Caco-2 (cell line): ENCODE measurements at regions of chr19 and their contacts with region 1.

Region 1: DNA sequence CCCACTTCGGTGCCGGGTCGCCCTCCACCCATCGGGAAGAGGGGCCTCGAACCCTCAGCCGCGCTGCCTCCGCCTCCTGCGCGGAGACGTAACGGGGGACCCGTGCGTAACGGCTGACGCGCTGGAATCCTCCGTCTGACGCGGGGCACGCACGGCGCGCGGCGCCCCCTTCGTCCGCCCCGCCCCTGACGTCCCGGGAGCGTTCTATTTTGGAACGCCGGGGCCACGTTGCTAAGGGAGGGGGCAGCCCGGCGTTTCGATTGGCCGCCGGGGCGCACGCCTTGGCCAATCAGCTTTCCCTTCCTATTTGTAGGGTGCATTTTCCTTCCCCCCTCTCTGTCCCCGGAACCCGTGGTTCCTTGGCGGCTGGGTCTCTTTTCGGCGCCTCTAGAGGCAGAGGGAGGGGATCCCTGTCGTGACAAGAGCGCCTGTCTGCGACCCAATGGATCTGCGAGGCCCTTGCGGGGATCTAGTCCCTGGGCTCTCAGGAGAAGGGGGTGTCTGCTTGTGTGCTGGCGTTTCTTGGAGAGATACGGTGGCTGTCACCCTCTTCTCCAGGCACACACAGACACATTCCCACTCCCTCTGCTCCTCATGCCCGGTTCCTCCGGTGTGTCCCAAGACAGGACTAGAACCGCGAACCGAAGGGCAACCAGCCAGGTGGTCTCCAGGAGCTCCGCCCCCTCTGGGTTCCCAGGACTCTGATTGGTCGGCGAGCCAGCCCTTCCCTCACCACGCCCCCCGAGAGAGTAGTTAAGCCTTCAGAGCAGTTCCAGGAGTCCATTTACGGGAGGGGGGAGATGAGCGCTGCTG is 1.5 kb downstream of the FOSB start:
- DNase-seq: peak; percentile 93 to 96
- H3K4me3 ChIP-seq: peak overlapping the region; percentile 74
- H3K4me3 Mint-ChIP-seq: peak overlapping the region; percentile 92
- H3K27ac Mint-ChIP-seq: peak overlapping the region; percentile 98
- H3K4me1 ChIP-seq: peaks cover 9% of the 10 kb centered on the region; the same call in 1 of the 2 replicates
- H3K4me1 Mint-ChIP-seq: peaks cover 6% of the 10 kb centered on the region
- H3K27me3 ChIP-seq: no peaks in the 10 kb centered on the region
- H3K27me3 Mint-ChIP-seq: no peaks in the 10 kb centered on the region
- CTCF ChIP-seq: peak in 1 of 2 experiments; percentile 2

Region 2: DNA sequence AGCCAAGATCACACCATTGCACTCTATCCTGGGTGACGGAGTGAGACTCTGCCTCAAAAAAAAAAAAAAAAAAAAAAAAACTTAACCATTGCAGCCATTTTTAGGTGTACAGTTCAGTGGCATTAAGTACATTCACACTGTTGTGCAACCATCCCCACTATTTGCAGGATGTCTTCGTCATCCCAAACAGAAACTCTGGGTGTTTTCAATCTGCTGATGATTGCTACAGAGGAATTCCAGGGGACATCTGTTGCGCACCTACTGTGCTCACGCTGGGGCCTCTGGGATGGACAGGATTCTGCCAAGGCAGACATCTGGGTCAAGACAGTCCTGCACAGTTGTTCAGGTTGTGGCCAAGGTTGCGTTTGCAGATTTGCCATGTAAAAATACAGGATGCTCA is 529.7 kb before region 1 on chr19:
- CTCF ChIA-PET with region 1: no interaction called
- POLR2A ChIA-PET with region 1: interaction called, 10 read pairs
- intact Hi-C with region 1: no loop called
- DNase-seq: no peak
- H3K4me3 ChIP-seq: no peak overlapping the region
- H3K4me3 Mint-ChIP-seq: no peak overlapping the region
- H3K27ac Mint-ChIP-seq: no peak overlapping the region
- H3K4me1 ChIP-seq: peaks cover 7% of the 10 kb centered on the region; the same call in 1 of the 2 replicates
- H3K4me1 Mint-ChIP-seq: peaks cover 8% of the 10 kb centered on the region
- H3K27me3 ChIP-seq: no peaks in the 10 kb centered on the region
- H3K27me3 Mint-ChIP-seq: no peaks in the 10 kb centered on the region
- CTCF ChIP-seq: no peak

Region 3: GRCh38 chr19:45382426-45382825 is 86.9 kb before region 1 on chr19:
- CTCF ChIA-PET with region 1: no interaction called
- POLR2A ChIA-PET with region 1: no interaction called
- intact Hi-C with region 1: no loop called
- DNase-seq: no peak
- H3K4me3 ChIP-seq: no peak overlapping the region
- H3K4me3 Mint-ChIP-seq: no peak overlapping the region
- H3K27ac Mint-ChIP-seq: peak overlapping the region; percentile 73
- H3K4me1 ChIP-seq: no peaks in the 10 kb centered on the region
- H3K4me1 Mint-ChIP-seq: no peaks in the 10 kb centered on the region
- H3K27me3 ChIP-seq: no peaks in the 10 kb centered on the region
- H3K27me3 Mint-ChIP-seq: no peaks in the 10 kb centered on the region
- CTCF ChIP-seq: no peak

Region 4: GRCh38 chr19:45439569-45440254 is 29.6 kb before region 1 on chr19:
- CTCF ChIA-PET with region 1: interaction called, 116 read pairs
- POLR2A ChIA-PET with region 1: interaction called, 15 read pairs
- intact Hi-C with region 1: loop called (anchors 1 kb)
- DNase-seq: peak; percentile 69 to 89
- H3K4me3 ChIP-seq: peak overlapping the region; percentile 61
- H3K4me3 Mint-ChIP-seq: peak overlapping the region; percentile 84
- H3K27ac Mint-ChIP-seq: peak overlapping the region; percentile 88
- H3K4me1 ChIP-seq: peaks cover 20% of the 10 kb centered on the region
- H3K4me1 Mint-ChIP-seq: peaks cover 21% of the 10 kb centered on the region
- H3K27me3 ChIP-seq: no peaks in the 10 kb centered on the region
- H3K27me3 Mint-ChIP-seq: no peaks in the 10 kb centered on the region
- CTCF ChIP-seq: peak; percentile 95 to 99

Region 5: GRCh38 chr19:45450012-45450333 is 19.4 kb before region 1 on chr19:
- CTCF ChIA-PET with region 1: interaction called, 3 read pairs
- POLR2A ChIA-PET with region 1: interaction called, 6 read pairs
- intact Hi-C with region 1: loop called (anchors 1 kb)
- DNase-seq: no peak
- H3K4me3 ChIP-seq: peak overlapping the region; percentile 51
- H3K4me3 Mint-ChIP-seq: peak overlapping the region; percentile 82
- H3K27ac Mint-ChIP-seq: peak overlapping the region; percentile 98
- H3K4me1 ChIP-seq: peaks cover 24% of the 10 kb centered on the region
- H3K4me1 Mint-ChIP-seq: peaks cover 39% of the 10 kb centered on the region
- H3K27me3 ChIP-seq: no peaks in the 10 kb centered on the region
- H3K27me3 Mint-ChIP-seq: no peaks in the 10 kb centered on the region
- CTCF ChIP-seq: no peak

Region 6: GRCh38 chr19:45455707-45456499 is 13.4 kb before region 1 on chr19:
- CTCF ChIA-PET with region 1: interaction called, 22 read pairs
- POLR2A ChIA-PET with region 1: interaction called, 38 read pairs
- intact Hi-C with region 1: loop called (anchors 1 kb)
- DNase-seq: peak; percentile 95
- H3K4me3 ChIP-seq: no peak overlapping the region
- H3K4me3 Mint-ChIP-seq: peak overlapping the region; percentile 46
- H3K27ac Mint-ChIP-seq: peak overlapping the region; percentile 96
- H3K4me1 ChIP-seq: peaks cover 26% of the 10 kb centered on the region
- H3K4me1 Mint-ChIP-seq: peaks cover 30% of the 10 kb centered on the region
- H3K27me3 ChIP-seq: no peaks in the 10 kb centered on the region
- H3K27me3 Mint-ChIP-seq: no peaks in the 10 kb centered on the region
- CTCF ChIP-seq: no peak

Region 7: GRCh38 chr19:45485305-45486077 is 16.2 kb after region 1 on chr19:
- CTCF ChIA-PET with region 1: interaction called, 21 read pairs
- POLR2A ChIA-PET with region 1: interaction called, 6 read pairs
- intact Hi-C with region 1: no loop called
- DNase-seq: peak; percentile 98
- H3K4me3 ChIP-seq: peak overlapping the region; percentile 66
- H3K4me3 Mint-ChIP-seq: peak overlapping the region; percentile 88
- H3K27ac Mint-ChIP-seq: peak overlapping the region; percentile 74
- H3K4me1 ChIP-seq: no peaks in the 10 kb centered on the region
- H3K4me1 Mint-ChIP-seq: peaks cover 6% of the 10 kb centered on the region
- H3K27me3 ChIP-seq: no peaks in the 10 kb centered on the region
- H3K27me3 Mint-ChIP-seq: no peaks in the 10 kb centered on the region
- CTCF ChIP-seq: peak; percentile 91 to 92

Region 8: GRCh38 chr19:45717166-45717982 is 248.0 kb after region 1 on chr19:
- CTCF ChIA-PET with region 1: no interaction called
- POLR2A ChIA-PET with region 1: interaction called, 11 read pairs
- intact Hi-C with region 1: no loop called
- DNase-seq: peak; percentile 99 to 100
- H3K4me3 ChIP-seq: peak overlapping the region; percentile 64
- H3K4me3 Mint-ChIP-seq: peak overlapping the region; percentile 95
- H3K27ac Mint-ChIP-seq: peak overlapping the region; percentile 96
- H3K4me1 ChIP-seq: peaks cover 14% of the 10 kb centered on the region
- H3K4me1 Mint-ChIP-seq: peaks cover 19% of the 10 kb centered on the region
- H3K27me3 ChIP-seq: no peaks in the 10 kb centered on the region
- H3K27me3 Mint-ChIP-seq: no peaks in the 10 kb centered on the region
- CTCF ChIP-seq: peak in 1 of 2 experiments; percentile 26

Region 9: DNA sequence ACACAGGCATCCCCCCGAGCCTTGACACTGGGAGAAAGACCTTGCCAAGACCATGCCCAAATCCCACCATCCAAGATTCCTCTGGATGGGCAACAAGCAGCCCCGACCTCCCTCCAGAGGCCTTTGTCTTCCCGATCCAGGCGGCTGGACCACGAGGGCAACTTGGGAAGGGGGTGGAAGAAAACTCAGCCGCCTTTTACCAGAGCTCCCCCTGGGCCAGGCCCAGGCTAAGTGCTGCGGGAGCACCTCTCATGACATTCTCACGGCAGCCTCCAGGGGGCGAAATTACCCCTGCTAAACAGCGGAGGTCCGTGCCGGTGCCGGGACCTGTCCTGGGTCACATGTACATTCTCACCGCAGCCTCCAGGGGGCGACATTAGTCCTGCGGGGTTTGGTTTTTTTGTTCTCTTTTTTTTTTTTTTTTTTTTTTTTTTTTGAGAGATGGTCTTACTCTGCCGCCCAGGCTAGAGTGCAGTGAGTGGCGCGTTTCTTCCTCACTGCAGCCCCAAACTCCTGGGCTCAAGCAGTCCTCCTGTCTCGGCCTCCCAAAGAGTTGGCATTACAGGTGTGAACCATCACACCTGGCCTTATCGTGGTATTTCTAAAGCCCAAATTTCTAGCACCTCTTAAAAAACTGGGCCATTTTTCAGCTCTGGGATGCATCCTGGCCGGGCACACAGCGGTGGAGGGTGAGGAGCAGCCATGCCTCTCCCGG is 347.8 kb after region 1 on chr19:
- CTCF ChIA-PET with region 1: no interaction called
- POLR2A ChIA-PET with region 1: no interaction called
- intact Hi-C with region 1: no loop called
- DNase-seq: peak; percentile 96 to 98
- H3K4me3 ChIP-seq: no peak overlapping the region
- H3K4me3 Mint-ChIP-seq: no peak overlapping the region
- H3K27ac Mint-ChIP-seq: no peak overlapping the region
- H3K4me1 ChIP-seq: peaks cover 6% of the 10 kb centered on the region; the same call in 1 of the 2 replicates
- H3K4me1 Mint-ChIP-seq: peaks cover 14% of the 10 kb centered on the region
- H3K27me3 ChIP-seq: no peaks in the 10 kb centered on the region
- H3K27me3 Mint-ChIP-seq: no peaks in the 10 kb centered on the region
- CTCF ChIP-seq: peak; percentile 97 to 99